ENCODE measurements at regions of chr11 and their contacts with region 1.

Region 1: GRCh38 chr11:113796663-113797259 is 17.2 kb downstream of the CLDN25 start:
- DNase-seq: no peak
- H3K4me3 ChIP-seq: no peak overlapping the region
- CTCF ChIP-seq: peak; percentile 62

Region 2: DNA sequence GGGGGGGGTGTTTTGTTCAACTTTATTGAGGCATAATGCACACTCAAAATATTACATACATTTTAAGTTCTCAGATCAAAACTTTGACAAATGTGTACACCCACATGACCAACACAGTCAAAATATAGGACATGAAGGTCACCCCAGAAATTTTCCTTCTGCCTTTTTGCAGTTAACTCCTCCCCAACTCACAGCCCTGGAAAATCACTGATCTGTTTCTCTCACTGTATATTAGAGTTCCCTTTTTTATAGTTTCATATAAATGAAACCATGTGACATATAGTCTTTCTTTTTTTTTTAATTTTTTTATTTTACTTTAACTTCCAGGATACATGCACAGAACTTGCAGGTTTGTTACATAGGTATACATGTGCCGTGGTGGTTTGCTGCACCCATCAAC is 95.3 kb before region 1 on chr11:
- CTCF ChIA-PET with region 1: no interaction called
- POLR2A ChIA-PET with region 1: no interaction called
- DNase-seq: no peak
- H3K4me3 ChIP-seq: no peak overlapping the region
- CTCF ChIP-seq: no peak

Region 3: GRCh38 chr11:113773416-113774173 is 23.2 kb before region 1 on chr11 and contains the start of gene ZW10:
- CTCF ChIA-PET with region 1: interaction called, 11 read pairs
- POLR2A ChIA-PET with region 1: no interaction called
- DNase-seq: peak; percentile 79
- H3K4me3 ChIP-seq: peak within 1 kb of the TSS; percentile 95
- CTCF ChIP-seq: peak; percentile 54

Region 4: GRCh38 chr11:113781679-113782078 is 15.1 kb before region 1 on chr11:
- CTCF ChIA-PET with region 1: interaction called, 17 read pairs
- POLR2A ChIA-PET with region 1: no interaction called
- DNase-seq: no peak
- H3K4me3 ChIP-seq: no peak overlapping the region
- CTCF ChIP-seq: no peak

Region 5: DNA sequence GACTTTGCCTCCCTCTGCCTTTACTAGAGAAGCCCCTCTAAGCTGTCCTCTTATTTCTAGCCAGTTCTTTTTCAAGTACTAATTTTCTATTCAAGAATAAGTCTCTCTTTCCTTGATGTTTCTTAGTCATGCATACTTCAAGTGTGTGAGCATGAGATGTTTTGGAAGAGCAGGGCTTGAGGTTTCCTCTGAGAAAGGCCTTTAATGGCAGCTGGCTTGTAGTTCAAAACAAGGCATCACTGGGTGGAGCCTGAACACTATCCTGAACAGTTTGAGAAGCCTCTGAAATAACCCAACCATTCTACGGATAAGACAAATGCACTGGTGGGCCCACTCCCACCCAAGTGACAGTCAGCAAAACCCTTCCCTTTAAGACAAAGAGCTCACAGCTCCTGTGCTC is 20.4 kb after region 1 on chr11:
- CTCF ChIA-PET with region 1: interaction called, 18 read pairs
- POLR2A ChIA-PET with region 1: no interaction called
- DNase-seq: peak; percentile 19
- H3K4me3 ChIP-seq: no peak overlapping the region
- CTCF ChIP-seq: no peak

Region 6: DNA sequence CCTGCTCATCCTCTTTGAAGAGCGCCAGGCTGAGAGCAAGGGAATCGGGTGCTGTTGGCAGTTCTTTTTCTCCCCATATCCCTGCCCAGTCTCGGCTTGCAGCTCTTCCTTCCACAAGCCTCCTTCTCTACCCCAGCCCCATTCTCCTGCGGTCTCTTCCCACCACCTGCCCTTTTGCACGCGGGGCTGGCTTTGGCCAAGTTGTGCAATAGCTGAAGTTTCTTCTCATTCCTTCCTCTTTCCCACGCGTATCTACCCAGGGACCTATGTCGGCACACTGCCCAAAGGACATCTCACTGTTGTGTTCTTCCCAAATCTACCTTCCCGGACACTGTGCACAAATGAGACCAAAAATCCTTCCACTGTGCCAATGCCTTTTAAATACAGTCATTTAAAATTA is 155.8 kb after region 1 on chr11:
- CTCF ChIA-PET with region 1: no interaction called
- POLR2A ChIA-PET with region 1: no interaction called
- DNase-seq: no peak
- H3K4me3 ChIP-seq: no peak overlapping the region
- CTCF ChIP-seq: no peak

Region 7: GRCh38 chr11:114099392-114100178 is 302.8 kb after region 1 on chr11:
- CTCF ChIA-PET with region 1: no interaction called
- POLR2A ChIA-PET with region 1: no interaction called
- DNase-seq: no peak
- H3K4me3 ChIP-seq: no peak overlapping the region
- CTCF ChIP-seq: no peak